Ascending aorta (tissue), 2 donors: ENCODE measurements at regions of chr9 and their contacts with region 1.

Region 1: GRCh38 chr9:128786681-128787601 is at the start of gene TBC1D13:
- DNase-seq: peak; percentile 53 to 93
- H3K4me3 ChIP-seq: peak within 1 kb of the TSS; percentile 59 to 97
- H3K27ac ChIP-seq: peak within 1 kb of the TSS; percentile 78 to 83
- H3K4me1 ChIP-seq: peaks cover 4 to 6% of the 10 kb centered on the region in 2 donors
- H3K27me3 ChIP-seq: no peaks in the 10 kb centered on the region
- CTCF ChIP-seq: no peak
- total RNA-seq, gene TBC1D13: 19.8 TPM

Region 2: DNA sequence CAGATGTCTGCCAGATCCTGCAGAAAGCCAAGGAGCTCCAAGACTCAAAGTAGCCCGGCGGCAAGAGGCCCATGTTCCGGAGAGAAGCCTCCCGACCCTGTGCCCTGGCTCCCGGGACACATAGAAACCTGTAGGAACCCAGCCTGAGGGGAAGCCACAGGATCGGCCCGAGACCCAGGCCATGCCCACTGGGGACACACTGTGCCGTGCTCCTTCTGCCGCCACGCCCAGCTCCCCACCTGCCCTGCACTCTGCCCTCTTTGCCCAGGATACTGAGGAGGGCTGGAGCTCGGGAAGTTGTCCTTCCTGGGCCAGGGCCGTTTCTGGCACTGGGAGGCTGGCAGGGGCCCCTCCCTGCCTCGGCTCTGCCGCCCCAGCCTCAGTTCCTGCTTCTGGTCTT is 20.9 kb after region 1 on chr9:
- intact Hi-C with region 1: no loop called
- DNase-seq: no peak
- H3K4me3 ChIP-seq: no peak overlapping the region
- H3K27ac ChIP-seq: no peak overlapping the region
- H3K4me1 ChIP-seq: no peaks in the 10 kb centered on the region
- H3K27me3 ChIP-seq: no peaks in the 10 kb centered on the region
- CTCF ChIP-seq: no peak

Region 3: GRCh38 chr9:128818099-128818838 is 31.3 kb after region 1 on chr9 and contains the start of gene ENDOG:
- intact Hi-C with region 1: loop called (anchors 2 kb)
- DNase-seq: peak; percentile 91 to 99
- H3K4me3 ChIP-seq: peak within 1 kb of the TSS; percentile 48 to 97
- H3K27ac ChIP-seq: peak within 1 kb of the TSS; percentile 80 to 84
- H3K4me1 ChIP-seq: peaks cover 3 to 6% of the 10 kb centered on the region in 2 donors
- H3K27me3 ChIP-seq: no peaks in the 10 kb centered on the region
- CTCF ChIP-seq: peak; percentile 94 to 99 (median 98)
- total RNA-seq, gene ENDOG: 59.4 TPM

Region 4: GRCh38 chr9:129202613-129203555 is 415.9 kb after region 1 on chr9:
- intact Hi-C with region 1: no loop called
- DNase-seq: peak; percentile 42 to 92
- H3K4me3 ChIP-seq: peak overlapping the region; percentile 54 to 80
- H3K27ac ChIP-seq: peak overlapping the region; percentile 81 to 96
- H3K4me1 ChIP-seq: peaks cover 5 to 8% of the 10 kb centered on the region in 2 donors
- H3K27me3 ChIP-seq: no peaks in the 10 kb centered on the region
- CTCF ChIP-seq: no peak

Region 5: GRCh38 chr9:129752915-129753729 is 966.2 kb after region 1 on chr9 and contains the start of gene PTGES:
- intact Hi-C with region 1: no loop called
- DNase-seq: peak in 1 of 2 donors; percentile 77
- H3K4me3 ChIP-seq: peak within 1 kb of the TSS; percentile 43 to 49
- H3K27ac ChIP-seq: no peak within 1 kb of the TSS
- H3K4me1 ChIP-seq: peaks cover 0 to 5% of the 10 kb centered on the region in 2 donors
- H3K27me3 ChIP-seq: no peaks in the 10 kb centered on the region
- CTCF ChIP-seq: no peak
- total RNA-seq, gene PTGES: 8.9 TPM